Calu3 (cell line): ENCODE measurements at regions of chr12 and their contacts with region 1.

Region 1: GRCh38 chr12:24778486-24779304 is 170.2 kb downstream of the BCAT1 start:
- DNase-seq: no peak
- H3K4me3 Mint-ChIP-seq: no peak overlapping the region
- H3K27ac Mint-ChIP-seq: no peak overlapping the region
- H3K4me1 Mint-ChIP-seq: no peaks in the 10 kb centered on the region
- H3K27me3 Mint-ChIP-seq: peaks cover under 1% of the 10 kb centered on the region
- CTCF ChIP-seq: peak; percentile 57

Region 2: DNA sequence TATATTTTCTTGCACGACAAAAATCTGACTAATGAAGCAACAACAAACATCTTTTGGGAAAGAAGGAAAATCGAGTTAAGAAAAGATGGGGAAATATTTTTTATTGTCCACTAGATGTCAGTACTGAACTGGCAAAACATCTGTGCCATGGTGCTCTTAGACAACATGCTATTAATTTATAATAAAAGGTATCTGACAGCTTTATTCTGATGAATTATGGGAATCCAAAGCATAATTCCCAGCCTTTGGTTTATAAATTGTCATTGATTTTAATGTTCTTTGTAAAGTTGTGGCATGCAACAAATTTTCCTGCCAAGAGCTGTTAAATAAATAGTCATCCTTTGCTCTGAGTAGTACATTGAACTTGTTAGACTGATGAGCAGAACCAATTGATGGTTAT is 1922.5 kb before region 1 on chr12:
- CTCF ChIA-PET with region 1: interaction called, 5 read pairs
- intact Hi-C with region 1: loop called (anchors 10 kb)
- DNase-seq: no peak
- H3K4me3 Mint-ChIP-seq: no peak overlapping the region
- H3K27ac Mint-ChIP-seq: no peak overlapping the region
- H3K4me1 Mint-ChIP-seq: peaks cover 6% of the 10 kb centered on the region
- H3K27me3 Mint-ChIP-seq: peaks cover 48% of the 10 kb centered on the region
- CTCF ChIP-seq: peak; percentile 47

Region 3: DNA sequence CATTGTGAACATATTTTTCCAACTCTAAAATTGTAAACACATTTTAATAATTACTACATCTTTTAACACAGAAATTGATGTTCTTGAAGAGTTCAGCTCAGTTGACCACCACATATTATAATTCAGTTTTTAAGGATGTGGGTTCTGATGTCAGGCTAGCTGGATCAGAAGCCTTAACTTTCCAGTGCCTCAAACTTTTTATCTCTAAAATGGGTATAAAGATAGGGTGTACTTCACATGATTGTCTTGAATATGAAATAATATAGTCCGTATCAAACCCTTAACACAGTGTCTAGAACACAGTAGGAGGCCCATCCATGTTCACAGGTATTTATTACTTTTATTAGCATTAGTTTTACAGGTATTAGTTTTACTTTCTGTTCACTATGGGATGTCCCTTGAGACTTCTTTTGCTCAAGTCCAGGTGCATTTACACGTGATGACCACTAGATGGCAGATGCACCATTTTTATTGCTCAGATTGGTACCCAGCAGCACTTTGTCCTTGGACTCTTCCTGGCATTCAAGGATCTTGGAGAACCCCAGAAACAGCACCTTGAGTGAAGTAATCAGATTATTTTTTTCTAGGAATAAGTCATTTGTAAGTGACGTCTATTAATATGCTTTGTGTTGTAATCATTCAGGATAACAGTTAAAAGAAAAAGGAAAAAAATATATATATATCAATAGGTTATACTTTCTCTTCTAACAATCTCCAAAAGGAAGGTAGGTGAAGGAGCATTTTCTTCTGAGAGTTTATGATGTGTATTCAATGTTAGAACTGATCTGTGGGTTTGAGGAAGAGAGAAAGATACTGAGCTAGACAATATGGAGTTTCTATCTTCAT is 1573.5 kb before region 1 on chr12:
- CTCF ChIA-PET with region 1: no interaction called
- intact Hi-C with region 1: loop called (anchors 5 kb)
- DNase-seq: peak; percentile 14
- H3K4me3 Mint-ChIP-seq: no peak overlapping the region
- H3K27ac Mint-ChIP-seq: no peak overlapping the region
- H3K4me1 Mint-ChIP-seq: no peaks in the 10 kb centered on the region
- H3K27me3 Mint-ChIP-seq: peaks cover 27% of the 10 kb centered on the region
- CTCF ChIP-seq: peak; percentile 81

Region 4: DNA sequence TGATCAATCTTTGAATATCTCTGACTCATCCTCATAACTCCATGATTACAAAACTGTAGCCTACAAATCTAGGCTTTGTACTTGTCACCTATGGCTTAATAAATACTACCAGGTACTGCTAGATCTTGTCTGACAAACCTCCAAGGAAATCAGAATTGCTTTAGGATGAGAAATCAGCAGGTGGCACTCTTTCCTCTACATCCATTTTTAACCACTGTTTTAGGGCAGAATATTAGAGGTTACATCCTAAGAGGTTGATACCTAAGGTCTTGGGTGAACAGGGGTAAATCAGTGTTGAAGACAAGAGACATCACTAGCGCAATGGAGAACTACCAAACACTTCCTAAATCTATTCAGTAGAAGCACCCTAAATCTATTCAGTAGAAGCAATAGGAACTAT is 766.2 kb before region 1 on chr12:
- CTCF ChIA-PET with region 1: no interaction called
- intact Hi-C with region 1: loop called (anchors 5 kb)
- DNase-seq: no peak
- H3K4me3 Mint-ChIP-seq: no peak overlapping the region
- H3K27ac Mint-ChIP-seq: no peak overlapping the region
- H3K4me1 Mint-ChIP-seq: no peaks in the 10 kb centered on the region
- H3K27me3 Mint-ChIP-seq: no peaks in the 10 kb centered on the region
- CTCF ChIP-seq: no peak

Region 5: DNA sequence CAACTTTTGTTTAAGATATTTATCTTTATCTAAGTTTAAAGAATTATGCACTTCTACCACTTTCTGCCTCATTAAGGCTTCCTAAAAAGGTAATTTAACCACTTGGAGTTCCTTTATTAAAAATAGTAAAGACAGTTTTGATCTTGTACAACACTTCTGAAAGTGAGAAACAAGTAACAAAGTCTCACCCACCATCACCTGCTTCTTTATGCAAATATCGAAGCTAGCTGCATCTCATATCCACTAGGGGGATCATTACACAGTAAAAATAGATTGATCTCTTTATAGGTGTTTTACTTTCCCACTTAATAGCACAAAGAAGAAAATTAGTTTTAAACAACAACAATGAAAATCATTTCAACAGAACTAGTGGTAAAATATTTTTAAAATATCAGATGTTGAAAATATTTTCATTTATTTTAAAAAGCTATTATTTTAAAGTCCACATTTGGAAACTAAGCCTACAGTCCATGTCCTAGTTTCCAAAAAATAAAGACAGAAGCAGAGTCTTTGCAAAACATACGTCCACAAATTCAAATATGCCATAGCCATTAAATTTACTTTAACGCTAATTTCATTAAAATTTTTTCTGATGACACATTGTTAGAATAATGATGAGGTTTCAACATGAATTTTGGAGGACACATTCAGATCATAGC is 669.2 kb before region 1 on chr12:
- CTCF ChIA-PET with region 1: no interaction called
- intact Hi-C with region 1: loop called (anchors 2 kb)
- DNase-seq: no peak
- H3K4me3 Mint-ChIP-seq: no peak overlapping the region
- H3K27ac Mint-ChIP-seq: no peak overlapping the region
- H3K4me1 Mint-ChIP-seq: no peaks in the 10 kb centered on the region
- H3K27me3 Mint-ChIP-seq: no peaks in the 10 kb centered on the region
- CTCF ChIP-seq: peak; percentile 24

Region 6: DNA sequence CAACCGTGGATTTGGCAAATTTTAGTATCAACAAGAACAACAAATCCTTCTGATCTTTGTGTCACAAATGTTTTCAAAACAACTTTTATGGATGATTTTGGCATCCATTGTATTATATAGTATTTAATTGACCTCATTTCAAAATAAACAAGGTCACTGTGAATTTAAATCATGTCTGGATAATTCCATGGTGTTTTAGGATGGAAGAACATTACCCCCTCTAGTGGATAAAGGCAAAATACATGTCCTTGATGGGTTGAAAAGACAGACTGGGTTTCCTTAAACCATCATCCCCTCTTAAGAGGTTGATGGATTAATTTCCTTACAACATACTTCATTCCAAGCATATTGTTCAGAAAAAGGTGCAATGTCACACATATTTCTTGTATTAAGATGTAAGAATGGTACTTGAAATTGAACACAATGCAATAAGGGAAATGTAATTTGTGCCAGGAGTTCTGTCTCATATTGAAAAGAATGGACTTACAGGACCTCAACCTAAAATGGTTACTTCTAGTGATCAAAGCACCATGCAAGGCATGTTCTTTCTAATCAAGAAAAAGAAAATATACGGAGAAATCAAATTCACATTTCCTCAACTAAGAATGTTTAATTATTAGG is 181.8 kb before region 1 on chr12:
- CTCF ChIA-PET with region 1: no interaction called
- intact Hi-C with region 1: loop called (anchors 2 kb)
- DNase-seq: no peak
- H3K4me3 Mint-ChIP-seq: no peak overlapping the region
- H3K27ac Mint-ChIP-seq: no peak overlapping the region
- H3K4me1 Mint-ChIP-seq: no peaks in the 10 kb centered on the region
- H3K27me3 Mint-ChIP-seq: peaks cover 32% of the 10 kb centered on the region
- CTCF ChIP-seq: peak; percentile 32

Region 7: DNA sequence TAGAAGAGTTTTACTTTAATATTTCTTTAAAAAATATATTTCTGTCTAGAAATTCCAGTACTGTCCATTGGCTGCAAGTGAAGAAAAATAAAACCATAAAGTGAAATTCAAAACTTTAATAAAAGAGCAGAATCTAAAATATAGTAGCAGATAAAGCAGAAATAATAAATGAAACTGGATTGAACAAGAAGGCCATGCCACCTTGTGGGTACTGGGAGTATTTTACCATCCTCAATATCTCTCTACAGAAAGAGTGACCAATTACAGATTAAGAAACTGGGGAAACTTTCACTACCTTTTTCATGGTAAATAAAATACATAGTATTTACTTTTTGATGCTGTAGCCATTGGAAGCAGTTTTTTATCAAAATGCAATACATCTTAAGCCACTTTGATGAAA is 50.3 kb before region 1 on chr12:
- CTCF ChIA-PET with region 1: no interaction called
- intact Hi-C with region 1: loop called (anchors 5 kb)
- DNase-seq: no peak
- H3K4me3 Mint-ChIP-seq: no peak overlapping the region
- H3K27ac Mint-ChIP-seq: no peak overlapping the region
- H3K4me1 Mint-ChIP-seq: peaks cover 7% of the 10 kb centered on the region
- H3K27me3 Mint-ChIP-seq: no peaks in the 10 kb centered on the region
- CTCF ChIP-seq: peak; percentile 28